Psoas muscle (tissue), 8 donors: ENCODE measurements at regions of chr2 and their contacts with region 1.

Region 1: DNA sequence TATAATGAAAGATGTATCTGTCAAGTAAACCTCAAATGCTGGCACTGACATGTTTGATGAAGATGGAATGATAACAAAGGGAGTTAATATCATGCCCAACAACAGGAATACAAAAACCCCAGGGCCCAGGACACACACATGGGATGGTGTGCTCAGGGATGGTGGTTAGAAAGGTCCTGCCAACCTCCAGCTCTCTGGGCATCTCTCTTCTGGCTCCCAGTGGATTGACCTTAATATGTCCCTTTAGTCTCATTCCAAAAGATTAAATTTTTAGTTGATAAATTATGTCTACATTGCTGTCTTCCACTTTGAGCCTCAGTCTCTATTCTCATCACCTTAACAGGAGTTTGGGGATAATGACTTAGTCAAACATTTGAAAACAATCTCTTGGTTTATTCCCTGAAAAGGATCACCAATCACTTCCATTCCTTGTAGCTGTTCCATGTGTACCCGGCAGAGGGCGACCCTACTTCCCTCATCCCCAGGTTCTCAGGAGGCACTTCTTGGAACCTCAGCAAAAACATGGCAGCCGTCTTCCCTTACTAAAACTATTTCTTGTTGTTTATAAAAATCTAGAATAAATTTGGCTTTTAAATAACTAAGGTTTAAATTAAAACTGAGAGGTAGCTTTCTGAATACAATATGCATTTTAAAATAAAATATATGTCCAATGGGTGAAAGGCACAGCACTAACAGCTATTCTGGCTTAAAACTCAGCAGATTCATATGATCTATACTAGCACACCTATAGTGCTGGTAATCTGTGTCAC is 29.6 kb downstream of the MCEE start:
- DNase-seq: peak; percentile 44 to 66
- ATAC-seq: peak; percentile 67 to 81 (median 74)
- H3K4me3 ChIP-seq: no peak overlapping the region
- H3K27ac ChIP-seq: no peak overlapping the region
- H3K4me1 ChIP-seq: no peaks in the 10 kb centered on the region
- H3K27me3 ChIP-seq: no peaks in the 10 kb centered on the region
- CTCF ChIP-seq: peak; percentile 70

Region 2: DNA sequence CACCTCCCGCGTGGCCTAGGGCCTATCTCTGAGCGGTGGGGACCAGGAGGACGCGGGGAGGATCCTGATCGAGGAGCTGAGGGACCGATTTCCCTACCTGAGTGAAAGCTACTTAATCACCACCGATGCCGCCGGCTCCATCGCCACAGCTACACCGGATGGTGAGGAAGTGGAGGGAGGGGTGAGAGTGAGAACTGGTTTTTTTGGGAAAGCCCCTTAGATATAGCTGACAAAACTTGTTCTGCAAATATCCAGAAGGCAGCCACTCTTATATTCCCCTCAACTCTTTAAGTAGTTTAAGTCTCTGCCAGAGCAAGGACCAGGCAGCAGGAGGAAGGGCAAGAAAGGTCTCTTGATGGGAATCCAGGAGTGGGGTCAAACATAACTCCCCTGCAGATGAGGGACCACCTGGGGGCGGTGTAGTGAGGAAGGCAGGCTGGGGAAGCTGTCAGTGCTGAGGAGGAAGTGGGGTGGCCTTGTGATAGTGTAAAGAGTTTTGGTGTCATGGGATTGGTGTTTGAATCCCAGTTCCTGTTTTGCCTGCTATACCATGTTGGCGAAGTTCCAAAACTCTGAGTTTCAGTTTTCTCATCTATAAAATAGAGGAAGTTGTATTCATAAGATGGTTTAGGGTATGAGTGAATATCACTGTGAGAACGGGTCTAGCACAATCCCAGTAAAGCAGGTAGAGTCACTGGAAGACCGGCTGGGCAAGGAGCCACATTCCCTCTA is 28.5 kb before region 1 on chr2:
- intact Hi-C with region 1: no loop called
- DNase-seq: no peak
- ATAC-seq: no peak
- H3K4me3 ChIP-seq: no peak overlapping the region
- H3K27ac ChIP-seq: no peak overlapping the region
- H3K4me1 ChIP-seq: peaks cover 21% of the 10 kb centered on the region
- H3K27me3 ChIP-seq: no peaks in the 10 kb centered on the region
- CTCF ChIP-seq: no peak

Region 3: GRCh38 chr2:71187589-71187988 is 87.2 kb after region 1 on chr2:
- intact Hi-C with region 1: loop called in 1 of 2 experiments (anchors 5 kb)
- DNase-seq: no peak
- ATAC-seq: no peak
- H3K4me3 ChIP-seq: no peak overlapping the region
- H3K27ac ChIP-seq: no peak overlapping the region
- H3K4me1 ChIP-seq: no peaks in the 10 kb centered on the region
- H3K27me3 ChIP-seq: no peaks in the 10 kb centered on the region
- CTCF ChIP-seq: no peak